ENCODE measurements at regions of chr15 and their contacts with region 1.

Region 1: GRCh38 chr15:59565299-59565698 is 46.3 kb upstream of the GCNT3 start:
- DNase-seq: no peak
- H3K4me3 ChIP-seq: no peak overlapping the region
- H3K27ac ChIP-seq: no peak overlapping the region
- H3K4me1 ChIP-seq: no peaks in the 10 kb centered on the region
- H3K27me3 ChIP-seq: no peaks in the 10 kb centered on the region
- CTCF ChIP-seq: no peak
- POLR2A ChIP-seq: no peak

Region 2: GRCh38 chr15:59528965-59529402 is 36.3 kb before region 1 on chr15:
- intact Hi-C with region 1: no loop called
- DNase-seq: peak; percentile 82 to 83
- H3K4me3 ChIP-seq: no peak overlapping the region
- H3K27ac ChIP-seq: no peak overlapping the region
- H3K4me1 ChIP-seq: no peaks in the 10 kb centered on the region
- H3K27me3 ChIP-seq: no peaks in the 10 kb centered on the region
- CTCF ChIP-seq: peak; percentile 44 to 84 (median 82)
- POLR2A ChIP-seq: no peak

Region 3: GRCh38 chr15:59553879-59554735 is 11.2 kb before region 1 on chr15:
- intact Hi-C with region 1: loop called (anchors 1 kb)
- DNase-seq: peak in 1 of 2 donors; percentile 35
- H3K4me3 ChIP-seq: no peak overlapping the region
- H3K27ac ChIP-seq: peak overlapping the region; percentile 72 to 83
- H3K4me1 ChIP-seq: no peaks in the 10 kb centered on the region
- H3K27me3 ChIP-seq: no peaks in the 10 kb centered on the region
- CTCF ChIP-seq: no peak
- POLR2A ChIP-seq: no peak

Measured in breast epithelium (tissue), 4 donors.